ENCODE measurements at regions of chrX and their contacts with region 1.

Region 1: DNA sequence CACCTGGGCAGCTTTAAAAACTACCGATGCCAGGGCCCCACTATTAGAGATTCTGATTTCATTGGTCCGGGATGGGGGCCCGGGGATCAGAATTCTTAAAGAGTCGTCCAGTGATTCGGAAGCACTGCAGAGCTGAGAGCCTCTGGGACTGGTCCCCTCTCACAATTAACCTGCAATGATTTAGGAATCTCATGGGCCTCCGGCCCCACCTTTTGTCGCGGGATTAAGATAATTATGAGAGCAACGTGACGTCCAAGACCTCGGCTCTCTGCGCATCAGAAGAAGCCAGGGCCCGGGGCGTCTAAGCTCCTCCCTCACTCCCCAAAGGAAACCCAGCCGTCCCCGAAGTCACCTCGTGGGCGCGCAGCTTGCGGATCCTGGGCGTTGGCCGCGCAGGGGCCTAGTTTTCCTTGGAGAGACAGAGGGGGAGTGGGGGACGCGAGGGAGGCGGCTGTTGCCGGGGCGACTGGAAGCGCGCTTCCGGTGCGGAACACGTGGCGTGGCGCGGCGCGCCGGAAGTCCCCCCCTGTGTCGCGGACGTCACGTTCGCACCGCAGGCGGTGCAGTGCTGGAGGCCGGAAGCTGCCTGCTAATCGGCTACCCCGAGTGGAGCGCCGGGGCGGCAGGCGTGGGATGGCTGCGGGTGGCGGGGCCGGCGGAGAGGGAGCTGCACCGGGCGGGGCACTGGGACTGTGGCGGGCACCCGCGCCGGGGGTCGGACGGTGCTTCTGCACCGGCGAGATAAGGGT is at the start of gene GEMIN8:
- DNase-seq: peak; percentile 86
- ATAC-seq: peak; percentile 97 to 99 (median 98)
- H3K4me3 ChIP-seq: peak within 1 kb of the TSS; percentile 50 to 85 (median 72)
- H3K27ac ChIP-seq: peak within 1 kb of the TSS; percentile 55 to 90 (median 84)
- H3K4me1 ChIP-seq: peaks cover 0 to 31% (median 15%) of the 10 kb centered on the region in 9 donors
- H3K27me3 ChIP-seq: peaks cover 0 to 50% (median 0%) of the 10 kb centered on the region in 7 donors
- CTCF ChIP-seq: no peak
- total RNA-seq, gene GEMIN8: 8.2 to 16.7 (median 12.8) TPM

Region 2: DNA sequence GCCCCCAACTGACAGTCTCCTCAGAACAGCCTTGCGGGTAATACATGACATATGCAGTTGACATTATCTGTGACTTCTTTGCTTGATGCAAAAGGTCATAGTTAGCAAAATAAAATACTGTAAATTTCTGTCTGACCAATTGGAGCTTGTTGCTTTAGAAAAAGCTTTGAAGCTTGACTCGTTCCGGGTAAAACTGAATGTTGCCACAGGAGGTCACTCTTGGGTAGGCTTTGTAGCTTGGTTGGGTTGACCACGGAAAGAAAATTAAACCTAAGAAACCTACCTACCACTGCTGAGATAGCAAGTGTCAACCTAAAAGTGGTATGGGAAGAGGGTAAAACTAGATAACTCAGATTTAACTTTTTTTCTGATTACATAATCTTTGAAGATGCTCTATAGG is 1215.2 kb before region 1 on chrX:
- intact Hi-C with region 1: loop called in 1 of 10 experiments (anchors 10 kb)
- DNase-seq: peak in 1 of 2 donors; percentile 13
- ATAC-seq: no peak
- H3K4me3 ChIP-seq: no peak overlapping the region
- H3K27ac ChIP-seq: no peak overlapping the region
- H3K4me1 ChIP-seq: no peaks in the 10 kb centered on the region
- H3K27me3 ChIP-seq: peaks cover 0 to 41% (median 0%) of the 10 kb centered on the region in 7 donors
- CTCF ChIP-seq: peak in 8 of 9 donors; percentile 15 to 56 (median 46)

Region 3: GRCh38 chrX:12962041-12962504 is 1067.5 kb before region 1 on chrX:
- intact Hi-C with region 1: loop called in 1 of 10 experiments (anchors 10 kb)
- DNase-seq: no peak
- ATAC-seq: no peak
- H3K4me3 ChIP-seq: no peak overlapping the region
- H3K27ac ChIP-seq: peak overlapping the region in 1 of 10 donors; percentile 66
- H3K4me1 ChIP-seq: peaks cover 0 to 33% (median 0%) of the 10 kb centered on the region in 9 donors
- H3K27me3 ChIP-seq: peaks cover 0 to 13% (median 0%) of the 10 kb centered on the region in 7 donors
- CTCF ChIP-seq: no peak

Region 4: DNA sequence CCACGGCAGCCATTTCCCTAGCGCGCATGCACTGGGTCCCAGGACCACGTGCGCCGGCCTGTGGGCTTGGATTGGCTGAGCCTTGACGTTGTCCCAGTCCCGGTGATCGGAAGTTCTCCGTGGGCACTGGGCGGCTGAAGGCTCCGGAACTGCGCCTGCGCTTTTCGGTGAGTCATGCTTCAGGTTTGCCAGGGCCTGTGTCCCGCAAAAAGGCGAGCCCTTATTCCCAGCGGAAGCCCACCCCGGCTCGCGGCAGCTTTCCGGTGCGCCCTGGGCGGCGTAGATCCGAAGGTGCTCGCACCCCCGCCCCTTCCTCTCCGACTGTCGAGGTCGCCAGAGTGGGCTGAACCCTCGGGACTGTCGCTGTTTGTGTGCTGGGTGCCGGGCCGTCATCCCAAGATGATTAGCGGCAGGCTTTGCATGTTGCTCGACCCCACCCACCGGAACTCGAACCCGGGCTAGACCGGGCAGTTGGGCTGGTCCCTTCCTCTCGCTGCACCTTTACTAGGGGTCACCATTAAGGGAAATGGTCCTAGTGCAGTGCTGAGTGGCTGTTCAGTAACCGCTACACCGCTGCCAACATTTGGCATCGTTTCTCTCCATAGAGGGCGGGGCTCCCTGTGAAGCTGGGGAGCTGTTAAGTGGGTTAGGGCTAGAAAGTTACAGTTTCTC is 376.4 kb before region 1 on chrX and contains the start of gene TCEANC:
- intact Hi-C with region 1: loop called in 8 of 10 experiments (anchors 2 to 10 kb)
- DNase-seq: peak; percentile 93 to 94
- ATAC-seq: peak; percentile 99 to 100 (median 100)
- H3K4me3 ChIP-seq: peak within 1 kb of the TSS; percentile 43 to 73 (median 66)
- H3K27ac ChIP-seq: peak within 1 kb of the TSS; percentile 87 to 96 (median 94)
- H3K4me1 ChIP-seq: peaks cover 0 to 26% (median 12%) of the 10 kb centered on the region in 9 donors
- H3K27me3 ChIP-seq: peaks cover 0 to 35% (median 0%) of the 10 kb centered on the region in 7 donors
- CTCF ChIP-seq: no peak
- total RNA-seq, gene TCEANC: 3.3 to 7.2 (median 4.6) TPM

Region 5: GRCh38 chrX:13750204-13750603 is 279.4 kb before region 1 on chrX:
- intact Hi-C with region 1: loop called in 6 of 10 experiments (anchors 1 to 10 kb)
- DNase-seq: no peak
- ATAC-seq: no peak
- H3K4me3 ChIP-seq: no peak overlapping the region
- H3K27ac ChIP-seq: no peak overlapping the region
- H3K4me1 ChIP-seq: peaks cover 0 to 5% (median 0%) of the 10 kb centered on the region in 9 donors
- H3K27me3 ChIP-seq: peaks cover 0 to 2% (median 0%) of the 10 kb centered on the region in 7 donors
- CTCF ChIP-seq: peak; percentile 18 to 61 (median 53)

Region 6: GRCh38 chrX:13898083-13898482 is 131.5 kb before region 1 on chrX:
- intact Hi-C with region 1: loop called in 3 of 10 experiments (anchors 5 to 10 kb)
- DNase-seq: peak in 1 of 2 donors; percentile 25
- ATAC-seq: no peak
- H3K4me3 ChIP-seq: no peak overlapping the region
- H3K27ac ChIP-seq: no peak overlapping the region
- H3K4me1 ChIP-seq: no peaks in the 10 kb centered on the region
- H3K27me3 ChIP-seq: peaks cover 0 to 53% (median 0%) of the 10 kb centered on the region in 7 donors
- CTCF ChIP-seq: peak in 4 of 9 donors; percentile 13 to 34 (median 28)

Measured in heart right ventricle (tissue), 16 donors.